Left lung (tissue), 14 donors: ENCODE measurements at regions of chr5 and their contacts with region 1.

Region 1: GRCh38 chr5:15013654-15014463 is 142.3 kb upstream of the ANKH start:
- DNase-seq: peak in 2 of 4 donors; percentile 43 to 62
- ATAC-seq: peak; percentile 95
- H3K4me3 ChIP-seq: no peak overlapping the region
- H3K27ac ChIP-seq: no peak overlapping the region
- H3K4me1 ChIP-seq: peaks cover 0 to 9% of the 10 kb centered on the region in 2 donors
- H3K27me3 ChIP-seq: no peaks in the 10 kb centered on the region
- CTCF ChIP-seq: peak; percentile 61 to 66

Region 2: GRCh38 chr5:14727428-14727865 is 286.4 kb before region 1 on chr5:
- intact Hi-C with region 1: loop called in 1 of 2 experiments (anchors 5 kb)
- DNase-seq: peak; percentile 75 to 94 (median 82)
- ATAC-seq: peak; percentile 93
- H3K4me3 ChIP-seq: no peak overlapping the region
- H3K27ac ChIP-seq: no peak overlapping the region
- H3K4me1 ChIP-seq: peaks cover 0 to 6% of the 10 kb centered on the region in 2 donors
- H3K27me3 ChIP-seq: no peaks in the 10 kb centered on the region
- CTCF ChIP-seq: peak; percentile 85 to 90

Region 3: DNA sequence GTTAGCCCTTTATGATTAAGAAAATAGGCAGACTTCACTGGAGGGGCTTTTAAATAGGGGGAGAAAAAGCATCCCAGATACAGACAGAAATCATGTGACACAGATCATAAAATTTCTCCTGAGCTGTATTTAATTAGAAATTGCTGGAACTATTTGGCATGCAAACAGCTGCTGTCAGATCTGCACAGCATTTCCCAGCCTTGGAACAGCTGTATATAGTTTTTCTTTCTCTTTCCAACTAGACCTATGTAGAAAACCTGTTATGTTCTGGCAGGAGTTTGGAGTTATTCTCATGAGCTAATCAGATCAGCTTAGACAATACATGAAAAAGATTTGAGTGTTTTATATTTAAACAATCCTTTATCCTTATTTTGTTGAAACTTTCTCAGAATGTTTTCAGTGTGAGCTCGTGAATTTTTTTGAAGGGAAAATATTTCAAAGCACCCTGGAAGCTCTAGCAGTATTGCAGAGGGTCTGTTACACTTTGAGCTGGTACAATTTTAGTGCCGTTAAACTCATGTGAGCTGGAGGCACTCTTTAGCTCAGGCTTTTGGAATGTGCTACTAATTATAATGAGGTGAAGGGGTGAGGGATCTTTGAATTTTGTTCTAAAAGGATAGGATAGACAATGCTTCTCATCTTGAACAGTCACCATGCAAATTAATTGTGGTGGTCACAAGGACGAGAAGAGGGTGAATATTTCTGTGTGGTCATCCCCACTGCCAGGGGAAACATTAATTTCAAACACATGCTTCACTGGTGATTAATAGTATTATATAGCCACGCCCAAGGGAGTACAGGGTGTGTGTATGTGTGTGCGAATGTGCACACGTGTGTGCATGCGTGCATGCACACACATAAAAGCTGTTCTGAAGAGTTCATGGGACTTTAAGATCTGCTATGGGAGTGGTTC is 246.8 kb after region 1 on chr5:
- intact Hi-C with region 1: no loop called
- DNase-seq: peak in 2 of 4 donors; percentile 69 to 74
- ATAC-seq: no peak
- H3K4me3 ChIP-seq: no peak overlapping the region
- H3K27ac ChIP-seq: no peak overlapping the region
- H3K4me1 ChIP-seq: no peaks in the 10 kb centered on the region
- H3K27me3 ChIP-seq: no peaks in the 10 kb centered on the region
- CTCF ChIP-seq: no peak